GM12878 (cell line): ENCODE measurements at regions of chr10 and their contacts with region 1.

Region 1: GRCh38 chr10:115355162-115355760 is 262.1 kb downstream of the ATRNL1 start:
- DNase-seq: peak; percentile 15
- ATAC-seq: peak; percentile 86
- H3K4me3 ChIP-seq: no peak overlapping the region
- H3K27ac ChIP-seq: no peak overlapping the region
- H3K4me1 ChIP-seq: no peaks in the 10 kb centered on the region
- H3K27me3 ChIP-seq: no peaks in the 10 kb centered on the region
- CTCF ChIP-seq: peak; percentile 66 to 76 (median 75)
- EP300 ChIP-seq: no peak
- POLR2A ChIP-seq: no peak
- RAD21 ChIP-seq: peak; percentile 92

Region 2: DNA sequence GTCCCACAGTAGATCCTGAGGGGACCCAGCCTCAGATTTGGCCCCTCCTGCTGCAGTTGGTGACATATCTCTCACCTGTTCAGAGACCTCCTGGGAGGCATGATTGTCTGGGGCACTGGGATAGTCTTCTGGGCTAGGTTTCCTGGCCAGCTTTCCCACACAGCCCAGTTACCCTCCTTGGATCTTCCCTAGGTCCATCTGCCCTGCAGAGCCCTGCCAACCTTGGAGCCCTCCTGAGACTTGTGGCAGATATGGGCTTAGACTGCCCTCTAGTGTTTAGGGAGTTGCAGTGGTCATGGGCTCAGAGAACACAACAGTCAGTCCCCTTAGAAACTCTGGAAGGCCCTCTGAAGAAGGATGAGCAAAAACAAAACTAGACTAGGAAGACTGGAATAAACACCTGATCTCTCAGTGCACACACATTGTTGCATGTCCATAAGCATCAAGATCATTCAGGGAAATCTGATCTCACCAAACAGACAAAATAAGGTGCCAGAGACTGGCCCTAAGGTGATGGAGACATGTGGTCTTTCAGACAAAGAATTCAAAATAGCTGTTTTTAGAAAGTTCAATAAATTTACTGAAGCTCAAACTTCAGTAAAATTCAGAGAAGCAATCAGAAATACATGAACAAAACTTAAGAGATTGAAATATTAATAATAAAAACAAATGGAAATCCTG is 62.5 kb after region 1 on chr10:
- CTCF ChIA-PET with region 1: interaction called, 5 read pairs
- POLR2A ChIA-PET with region 1: no interaction called
- RAD21 ChIA-PET with region 1: no interaction called
- SMC1A ChIA-PET with region 1: interaction called, 3 read pairs
- in situ Hi-C with region 1: no loop called
- intact Hi-C with region 1: loop called (anchors 1 kb)
- DNase-seq: peak; percentile 4
- ATAC-seq: peak; percentile 99
- H3K4me3 ChIP-seq: no peak overlapping the region
- H3K27ac ChIP-seq: no peak overlapping the region
- H3K4me1 ChIP-seq: no peaks in the 10 kb centered on the region
- H3K27me3 ChIP-seq: no peaks in the 10 kb centered on the region
- CTCF ChIP-seq: peak; percentile 71 to 79 (median 78)
- EP300 ChIP-seq: no peak
- POLR2A ChIP-seq: no peak
- RAD21 ChIP-seq: peak; percentile 89

Region 3: DNA sequence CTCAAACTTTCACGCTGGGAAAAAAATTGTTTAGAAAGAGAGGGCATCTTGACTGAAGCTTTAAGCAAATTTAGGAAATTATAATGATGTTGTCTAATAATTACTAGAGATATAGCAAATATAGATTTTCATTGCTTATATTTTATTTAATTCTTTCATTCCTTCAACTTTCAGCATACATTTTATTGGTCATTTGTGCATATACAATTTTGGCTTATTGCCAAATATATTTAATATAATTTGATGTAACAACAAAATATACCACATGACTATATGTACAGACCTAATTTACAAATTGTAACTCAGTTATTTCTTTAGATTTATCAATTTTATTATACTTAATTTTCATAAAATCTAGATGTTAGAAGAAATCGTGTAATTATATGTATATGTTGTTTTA is 128.0 kb after region 1 on chr10:
- CTCF ChIA-PET with region 1: no interaction called
- POLR2A ChIA-PET with region 1: no interaction called
- RAD21 ChIA-PET with region 1: no interaction called
- SMC1A ChIA-PET with region 1: no interaction called
- in situ Hi-C with region 1: no loop called
- intact Hi-C with region 1: no loop called
- DNase-seq: no peak
- ATAC-seq: no peak
- H3K4me3 ChIP-seq: no peak overlapping the region
- H3K27ac ChIP-seq: no peak overlapping the region
- H3K4me1 ChIP-seq: no peaks in the 10 kb centered on the region
- H3K27me3 ChIP-seq: no peaks in the 10 kb centered on the region
- CTCF ChIP-seq: no peak
- EP300 ChIP-seq: no peak
- POLR2A ChIP-seq: no peak
- RAD21 ChIP-seq: no peak

Region 4: GRCh38 chr10:115558252-115558651 is 203.0 kb after region 1 on chr10:
- CTCF ChIA-PET with region 1: no interaction called
- POLR2A ChIA-PET with region 1: no interaction called
- RAD21 ChIA-PET with region 1: no interaction called
- SMC1A ChIA-PET with region 1: no interaction called
- in situ Hi-C with region 1: no loop called
- intact Hi-C with region 1: no loop called
- DNase-seq: no peak
- ATAC-seq: no peak
- H3K4me3 ChIP-seq: no peak overlapping the region
- H3K27ac ChIP-seq: no peak overlapping the region
- H3K4me1 ChIP-seq: no peaks in the 10 kb centered on the region
- H3K27me3 ChIP-seq: no peaks in the 10 kb centered on the region
- CTCF ChIP-seq: no peak
- EP300 ChIP-seq: no peak
- POLR2A ChIP-seq: no peak
- RAD21 ChIP-seq: no peak

Region 5: DNA sequence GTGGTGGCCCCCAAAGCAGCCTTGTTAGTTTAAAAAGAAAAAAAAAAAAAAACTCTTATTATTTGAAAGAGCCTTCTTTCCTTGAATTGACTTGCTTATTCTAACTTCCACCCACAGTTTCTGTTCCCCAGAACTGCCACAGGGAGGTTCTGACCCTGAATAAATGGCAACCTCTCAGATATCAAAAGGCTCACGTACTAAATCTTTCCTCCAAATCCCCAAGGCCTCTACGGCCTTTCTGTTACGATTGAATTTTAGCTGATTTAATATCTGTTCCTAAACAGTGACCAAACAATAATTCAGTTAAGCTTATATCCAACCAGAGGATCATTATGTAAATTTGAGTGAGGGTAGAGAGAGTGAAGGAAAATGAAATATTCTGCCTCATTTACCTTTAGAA is 435.0 kb after region 1 on chr10:
- CTCF ChIA-PET with region 1: no interaction called
- POLR2A ChIA-PET with region 1: no interaction called
- RAD21 ChIA-PET with region 1: no interaction called
- SMC1A ChIA-PET with region 1: no interaction called
- in situ Hi-C with region 1: no loop called
- intact Hi-C with region 1: loop called (anchors 10 kb)
- DNase-seq: no peak
- ATAC-seq: no peak
- H3K4me3 ChIP-seq: no peak overlapping the region
- H3K27ac ChIP-seq: no peak overlapping the region
- H3K4me1 ChIP-seq: no peaks in the 10 kb centered on the region
- H3K27me3 ChIP-seq: no peaks in the 10 kb centered on the region; a peak in 1 of 4 replicates
- CTCF ChIP-seq: no peak
- EP300 ChIP-seq: no peak
- POLR2A ChIP-seq: no peak
- RAD21 ChIP-seq: no peak

Region 6: GRCh38 chr10:116120688-116121455 is 765.6 kb after region 1 on chr10:
- CTCF ChIA-PET with region 1: no interaction called
- POLR2A ChIA-PET with region 1: no interaction called
- RAD21 ChIA-PET with region 1: no interaction called
- SMC1A ChIA-PET with region 1: no interaction called
- in situ Hi-C with region 1: no loop called
- intact Hi-C with region 1: no loop called
- DNase-seq: no peak
- ATAC-seq: no peak
- H3K4me3 ChIP-seq: no peak overlapping the region
- H3K27ac ChIP-seq: no peak overlapping the region
- H3K4me1 ChIP-seq: no peaks in the 10 kb centered on the region
- H3K27me3 ChIP-seq: no peaks in the 10 kb centered on the region
- CTCF ChIP-seq: 0 out of 6 replicates have a peak, but pooled peaks of 1 of the 3 experiments have one; percentile 20
- EP300 ChIP-seq: no peak
- POLR2A ChIP-seq: no peak
- RAD21 ChIP-seq: no peak

Region 7: DNA sequence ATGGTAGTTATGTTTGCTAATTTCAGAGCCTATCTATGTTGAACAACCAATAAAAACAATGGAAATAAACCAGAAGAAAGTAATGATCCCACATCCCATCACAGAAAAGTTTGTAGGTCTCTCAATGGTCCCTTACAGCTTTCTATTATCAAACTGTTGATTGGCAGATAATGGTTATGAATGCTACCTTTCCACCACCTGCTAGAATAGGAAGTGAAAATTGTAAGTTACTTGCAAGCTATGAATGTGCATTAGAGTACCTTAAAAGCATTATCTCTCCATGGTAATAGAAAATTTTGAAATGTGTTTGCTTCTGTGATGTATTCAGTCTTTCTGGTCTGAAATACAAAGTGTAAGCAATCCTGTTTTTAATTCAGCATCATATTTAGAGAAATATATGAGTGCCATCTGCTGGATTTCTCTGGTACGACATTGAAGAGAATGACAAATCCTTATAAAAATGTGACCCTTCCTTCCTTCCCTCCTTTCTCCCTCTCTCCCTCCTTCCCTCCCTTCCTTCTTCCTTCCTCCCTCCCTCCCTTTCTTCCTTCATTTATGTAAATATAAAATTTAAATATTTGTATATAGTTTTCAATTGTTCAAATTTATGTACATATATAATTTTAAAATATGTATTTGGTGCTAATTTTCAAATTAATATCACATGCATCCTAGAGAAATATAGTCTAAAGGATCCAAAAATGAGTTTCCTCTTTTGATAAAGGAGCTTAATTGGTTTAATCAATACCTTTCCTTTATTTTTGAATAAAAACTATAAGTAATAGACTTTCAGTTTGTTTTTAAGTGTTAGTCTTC is 1030.9 kb after region 1 on chr10:
- CTCF ChIA-PET with region 1: no interaction called
- POLR2A ChIA-PET with region 1: no interaction called
- RAD21 ChIA-PET with region 1: no interaction called
- SMC1A ChIA-PET with region 1: interaction called, 3 read pairs
- in situ Hi-C with region 1: no loop called
- intact Hi-C with region 1: loop called (anchors 5 kb)
- DNase-seq: no peak
- ATAC-seq: peak; percentile 34; the same call in 2 of the 3 replicates
- H3K4me3 ChIP-seq: no peak overlapping the region
- H3K27ac ChIP-seq: no peak overlapping the region
- H3K4me1 ChIP-seq: no peaks in the 10 kb centered on the region
- H3K27me3 ChIP-seq: no peaks in the 10 kb centered on the region
- CTCF ChIP-seq: peak; percentile 25 to 48 (median 28); a peak in 4 of 6 replicates
- EP300 ChIP-seq: no peak
- POLR2A ChIP-seq: no peak
- RAD21 ChIP-seq: 0 out of 2 replicates have a peak, but pooled peaks have one; percentile 26

Region 8: DNA sequence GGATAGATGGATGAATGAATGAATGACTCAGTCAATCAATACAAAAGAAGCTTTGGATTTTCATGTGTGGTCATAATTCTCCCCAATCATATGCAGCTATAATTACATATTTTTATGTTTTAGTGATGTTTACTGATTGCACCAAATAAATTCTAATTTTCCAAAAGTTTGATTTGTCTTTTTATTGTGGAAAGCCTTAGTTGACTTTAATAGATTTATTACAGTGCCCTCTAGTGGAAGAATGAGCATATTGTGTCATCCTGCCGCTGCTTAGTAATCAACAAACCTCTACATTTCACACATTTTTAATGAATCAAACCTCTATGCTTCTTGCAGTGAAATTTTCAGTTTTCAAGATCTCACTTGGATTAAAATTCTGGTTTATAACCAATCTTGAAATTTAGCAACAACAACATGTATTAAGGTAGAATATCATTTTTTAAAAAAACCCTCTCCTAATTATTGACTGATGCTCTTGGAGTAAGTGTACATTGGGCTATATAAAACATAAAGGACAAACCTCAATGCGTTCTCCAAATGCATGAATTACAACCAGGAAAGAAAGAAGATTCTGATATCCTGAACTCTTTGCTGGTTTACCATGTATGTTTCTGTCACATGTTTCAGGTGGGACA is 1134.9 kb after region 1 on chr10:
- CTCF ChIA-PET with region 1: no interaction called
- POLR2A ChIA-PET with region 1: no interaction called
- RAD21 ChIA-PET with region 1: no interaction called
- SMC1A ChIA-PET with region 1: no interaction called
- in situ Hi-C with region 1: no loop called
- intact Hi-C with region 1: loop called (anchors 5 kb)
- DNase-seq: no peak
- ATAC-seq: peak; percentile 62
- H3K4me3 ChIP-seq: no peak overlapping the region
- H3K27ac ChIP-seq: no peak overlapping the region
- H3K4me1 ChIP-seq: no peaks in the 10 kb centered on the region
- H3K27me3 ChIP-seq: no peaks in the 10 kb centered on the region
- CTCF ChIP-seq: peak; percentile 49 to 60 (median 53); a peak in 5 of 6 replicates
- EP300 ChIP-seq: no peak
- POLR2A ChIP-seq: no peak
- RAD21 ChIP-seq: 0 out of 2 replicates have a peak, but pooled peaks have one; percentile 11